ENCODE measurements at regions of chr16 and their contacts with region 1.

Region 1: DNA sequence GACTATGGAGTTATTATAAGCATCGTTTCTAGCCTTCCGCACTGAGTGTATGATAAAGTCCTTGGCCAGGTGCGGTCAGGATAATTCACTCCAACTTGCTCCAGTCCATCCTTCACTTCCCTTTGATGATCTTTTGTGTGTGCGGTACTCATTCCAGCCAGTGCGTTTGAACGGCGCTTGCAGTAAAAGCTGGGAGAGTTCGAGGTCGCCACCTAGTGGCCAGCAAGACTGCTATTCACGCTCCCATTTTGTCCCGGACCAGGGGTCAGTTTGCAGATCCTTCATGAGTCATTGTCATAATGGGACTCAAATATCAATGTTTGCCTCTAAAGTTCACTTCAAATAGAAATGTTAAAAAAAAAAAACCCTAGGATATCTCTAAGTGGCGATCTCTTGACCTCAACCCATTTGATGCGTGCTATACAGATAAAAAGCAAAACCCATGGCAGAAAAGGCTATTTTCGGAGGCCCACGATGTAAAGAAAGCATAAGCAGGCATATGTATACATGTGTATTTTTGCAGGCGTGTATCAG is 417.1 kb downstream of the TMEM114 start:
- DNase-seq: peak; percentile 68
- H3K4me3 ChIP-seq: no peak overlapping the region
- H3K27ac ChIP-seq: no peak overlapping the region
- H3K4me1 ChIP-seq: no peaks in the 10 kb centered on the region
- CTCF ChIP-seq: peak; percentile 97

Region 2: DNA sequence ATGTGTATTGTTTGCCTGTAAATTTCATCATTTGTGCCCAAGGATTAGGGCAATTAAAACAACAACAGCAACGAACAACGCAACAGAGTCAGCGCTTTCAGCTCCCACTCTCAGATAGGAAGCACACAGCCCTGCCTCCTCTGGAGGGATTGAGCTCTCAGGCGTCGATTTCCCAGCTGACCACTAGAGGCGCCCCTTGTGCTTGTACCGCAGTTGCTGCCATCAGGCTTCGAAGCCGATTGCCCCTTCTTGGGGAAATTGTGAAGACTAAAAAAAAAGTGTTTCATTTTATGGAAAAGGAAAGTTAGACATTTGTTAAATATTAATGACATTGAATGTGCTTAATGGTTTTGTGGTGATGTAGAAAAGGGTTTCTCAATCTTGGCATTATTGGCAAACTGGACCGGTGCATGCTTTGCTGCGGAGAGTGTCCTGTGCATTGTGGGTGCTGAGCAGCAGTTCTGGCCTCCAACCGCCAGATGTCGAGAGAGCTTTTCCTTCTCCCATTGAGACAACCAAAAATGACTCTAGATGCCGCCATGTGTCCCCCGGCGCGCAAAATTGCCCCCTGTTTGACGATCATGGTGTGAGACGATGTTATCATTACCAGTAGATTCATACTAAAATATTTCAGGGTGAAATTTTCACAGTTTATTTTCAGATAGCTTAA is 1490.9 kb before region 1 on chr16:
- CTCF ChIA-PET with region 1: no interaction called
- POLR2A ChIA-PET with region 1: no interaction called
- intact Hi-C with region 1: loop called (anchors 10 kb)
- DNase-seq: peak; percentile 35
- H3K4me3 ChIP-seq: no peak overlapping the region
- H3K27ac ChIP-seq: no peak overlapping the region
- H3K4me1 ChIP-seq: no peaks in the 10 kb centered on the region
- CTCF ChIP-seq: peak; percentile 85

Region 3: DNA sequence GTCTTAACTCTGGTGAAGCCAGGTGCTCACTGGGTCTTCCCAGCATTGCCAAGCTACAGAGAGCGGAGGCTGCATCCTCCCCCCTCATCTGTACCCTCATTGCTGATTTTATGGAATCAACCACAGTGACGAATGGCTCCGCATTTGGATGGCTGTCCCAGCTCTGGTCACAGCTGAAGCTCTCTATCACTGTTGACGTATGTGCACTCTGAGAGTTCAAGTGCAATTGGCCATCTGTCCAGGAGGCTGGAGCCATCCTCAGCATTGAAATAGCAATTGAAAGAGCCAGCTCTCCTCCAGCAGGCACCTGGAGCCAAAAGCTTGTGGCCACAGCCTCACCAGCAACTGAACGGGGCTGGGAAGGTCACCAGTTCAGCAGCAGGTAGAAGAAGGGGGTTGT is 77.0 kb before region 1 on chr16:
- CTCF ChIA-PET with region 1: no interaction called
- POLR2A ChIA-PET with region 1: no interaction called
- intact Hi-C with region 1: no loop called
- DNase-seq: no peak
- H3K4me3 ChIP-seq: no peak overlapping the region
- H3K27ac ChIP-seq: no peak overlapping the region
- H3K4me1 ChIP-seq: no peaks in the 10 kb centered on the region
- CTCF ChIP-seq: no peak